ENCODE measurements at regions of chr6 and their contacts with region 1.

Region 1: DNA sequence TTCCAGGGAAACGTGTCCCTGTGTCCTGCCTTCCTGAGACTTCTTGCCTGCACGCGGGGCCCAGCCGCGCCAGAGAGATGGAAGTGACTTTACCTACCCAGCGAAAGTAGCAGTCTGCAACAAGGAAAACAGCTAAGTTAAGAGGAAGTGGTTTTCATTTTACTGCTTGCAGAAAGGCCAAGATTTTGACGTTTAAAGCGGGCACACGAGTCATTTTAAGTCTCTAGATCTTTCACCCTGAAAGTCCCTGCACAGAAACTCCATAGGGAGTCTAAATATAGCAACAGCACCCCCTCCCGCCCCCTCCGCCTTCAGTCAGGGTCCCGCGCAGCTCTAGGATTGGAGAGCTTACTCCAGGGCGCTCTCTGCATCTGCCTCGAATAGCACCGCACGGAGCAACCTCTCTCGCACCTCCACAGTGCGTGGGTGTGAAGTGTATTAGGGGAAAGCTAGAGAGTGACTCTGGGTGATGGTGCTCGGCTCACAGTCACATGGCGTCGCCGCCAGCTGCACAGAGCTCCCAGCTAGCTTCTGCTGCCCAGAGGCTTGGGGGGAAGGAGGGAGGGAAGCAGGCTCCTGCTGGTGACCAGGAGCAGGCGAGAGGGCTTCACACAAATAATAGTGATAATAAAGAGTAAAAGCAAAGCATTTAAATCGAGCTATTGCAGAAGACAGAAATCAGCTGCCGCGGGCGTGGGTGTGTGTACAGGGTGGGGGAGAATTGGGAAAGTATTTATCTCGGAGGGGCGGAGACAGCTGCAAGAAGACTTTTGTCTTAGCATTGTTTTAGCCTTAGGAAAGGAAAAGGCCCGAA is 1.8 kb upstream of the KCNQ5 start:
- DNase-seq: peak; percentile 64
- H3K4me3 ChIP-seq: peak overlapping the region in 1 of 2 experiments; percentile 92; a peak in 2 of 4 replicates
- H3K27ac ChIP-seq: no peak overlapping the region
- H3K4me1 ChIP-seq: peaks cover 9 to 17% of the 10 kb centered on the region in 2 experiments; a peak in 2 of 4 replicates
- H3K27me3 ChIP-seq: no peaks in the 10 kb centered on the region
- CTCF ChIP-seq: no peak
- EP300 ChIP-seq: no peak
- RAD21 ChIP-seq: no peak

Region 2: DNA sequence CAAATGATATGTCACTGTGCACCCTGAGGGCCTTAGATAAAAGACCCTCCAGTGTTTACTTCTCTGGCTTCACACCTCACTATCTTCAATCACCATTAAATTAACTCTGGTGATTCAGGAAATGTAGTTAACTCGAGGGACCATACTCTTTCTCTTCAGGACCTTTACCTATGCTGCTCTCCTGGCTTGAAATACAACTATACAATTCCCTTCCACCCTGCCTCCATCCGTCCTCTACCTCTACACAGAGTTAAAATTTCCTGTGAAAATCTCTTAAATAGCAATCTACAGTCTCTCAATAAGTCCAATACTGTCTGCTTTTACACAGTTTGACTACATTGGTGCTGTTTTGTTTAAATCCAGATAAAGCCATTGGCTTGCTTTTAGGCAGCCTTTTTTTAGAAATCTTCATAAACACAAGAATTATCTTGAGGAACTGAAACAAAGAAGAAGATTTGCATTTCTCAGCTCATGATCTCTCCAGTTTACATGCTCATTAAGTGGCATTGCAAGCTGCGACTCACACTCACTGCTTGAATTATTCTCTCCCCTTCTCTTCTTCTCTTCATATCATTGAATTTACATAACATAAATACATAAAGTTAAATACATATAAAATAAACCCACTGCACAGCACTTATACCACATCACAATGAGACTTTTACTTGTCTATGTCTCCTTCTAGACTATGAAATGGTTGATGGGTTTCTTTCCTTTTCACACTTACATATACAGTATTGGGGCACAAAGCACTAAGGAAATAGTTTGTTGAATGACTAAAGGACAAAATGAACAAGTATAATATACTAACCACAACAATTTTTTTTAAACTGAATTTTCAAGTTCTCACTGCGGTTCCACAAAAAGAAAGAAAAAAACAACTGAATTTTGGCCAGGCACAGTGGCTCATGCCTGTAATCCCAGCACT is 237.2 kb before region 1 on chr6:
- CTCF ChIA-PET with region 1: no interaction called
- POLR2A ChIA-PET with region 1: no interaction called
- DNase-seq: no peak
- H3K4me3 ChIP-seq: no peak overlapping the region
- H3K27ac ChIP-seq: no peak overlapping the region
- H3K4me1 ChIP-seq: no peaks in the 10 kb centered on the region
- H3K27me3 ChIP-seq: no peaks in the 10 kb centered on the region
- CTCF ChIP-seq: no peak
- EP300 ChIP-seq: no peak
- RAD21 ChIP-seq: no peak

Region 3: DNA sequence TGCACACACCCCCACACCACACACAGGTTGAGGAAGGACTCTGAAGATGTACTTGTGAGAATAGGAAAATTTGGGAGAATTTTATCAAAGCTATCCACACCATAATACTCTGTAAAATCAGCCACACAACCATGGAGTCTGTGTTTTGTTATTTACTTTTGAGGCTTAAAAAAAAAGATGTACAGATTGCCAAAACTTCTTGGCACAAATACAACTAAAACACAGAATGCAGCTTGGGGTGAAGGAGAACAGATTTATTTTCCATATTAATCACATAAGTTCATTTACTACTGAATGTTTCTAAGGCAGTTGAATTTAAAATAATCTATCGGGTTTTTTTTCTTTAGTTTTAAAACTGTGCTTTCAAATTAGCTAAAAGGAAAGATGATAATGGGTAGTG is 31.0 kb before region 1 on chr6:
- CTCF ChIA-PET with region 1: interaction called, 12 read pairs
- POLR2A ChIA-PET with region 1: no interaction called
- DNase-seq: no peak
- H3K4me3 ChIP-seq: no peak overlapping the region
- H3K27ac ChIP-seq: no peak overlapping the region
- H3K4me1 ChIP-seq: no peaks in the 10 kb centered on the region; a peak in 1 of 4 replicates
- H3K27me3 ChIP-seq: no peaks in the 10 kb centered on the region
- CTCF ChIP-seq: no peak
- EP300 ChIP-seq: no peak
- RAD21 ChIP-seq: no peak

Region 4: DNA sequence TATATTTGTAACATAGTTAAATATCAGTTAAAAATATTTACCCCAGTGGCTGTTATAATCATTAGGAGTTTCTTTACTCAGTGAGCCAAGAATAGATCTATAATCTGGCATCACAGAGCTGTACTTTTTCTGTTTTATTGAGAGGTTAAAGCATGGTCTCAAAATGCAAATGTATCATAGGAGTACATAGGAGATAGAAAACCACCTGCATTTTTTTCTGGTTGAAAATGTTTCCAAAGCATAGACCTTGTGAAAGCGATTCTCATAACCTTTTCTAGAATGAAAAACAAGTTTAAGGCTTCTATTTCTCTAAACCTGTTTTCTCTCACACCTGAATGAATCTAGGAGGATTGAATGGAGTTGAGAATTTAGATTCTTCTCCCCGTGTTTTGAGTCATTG is 16.1 kb after region 1 on chr6:
- CTCF ChIA-PET with region 1: interaction called, 13 read pairs
- POLR2A ChIA-PET with region 1: no interaction called
- DNase-seq: no peak
- H3K4me3 ChIP-seq: no peak overlapping the region
- H3K27ac ChIP-seq: no peak overlapping the region
- H3K4me1 ChIP-seq: peaks cover 0 to 2% of the 10 kb centered on the region in 2 experiments; a peak in 3 of 4 replicates
- H3K27me3 ChIP-seq: no peaks in the 10 kb centered on the region
- CTCF ChIP-seq: no peak
- EP300 ChIP-seq: no peak
- RAD21 ChIP-seq: no peak

Region 5: DNA sequence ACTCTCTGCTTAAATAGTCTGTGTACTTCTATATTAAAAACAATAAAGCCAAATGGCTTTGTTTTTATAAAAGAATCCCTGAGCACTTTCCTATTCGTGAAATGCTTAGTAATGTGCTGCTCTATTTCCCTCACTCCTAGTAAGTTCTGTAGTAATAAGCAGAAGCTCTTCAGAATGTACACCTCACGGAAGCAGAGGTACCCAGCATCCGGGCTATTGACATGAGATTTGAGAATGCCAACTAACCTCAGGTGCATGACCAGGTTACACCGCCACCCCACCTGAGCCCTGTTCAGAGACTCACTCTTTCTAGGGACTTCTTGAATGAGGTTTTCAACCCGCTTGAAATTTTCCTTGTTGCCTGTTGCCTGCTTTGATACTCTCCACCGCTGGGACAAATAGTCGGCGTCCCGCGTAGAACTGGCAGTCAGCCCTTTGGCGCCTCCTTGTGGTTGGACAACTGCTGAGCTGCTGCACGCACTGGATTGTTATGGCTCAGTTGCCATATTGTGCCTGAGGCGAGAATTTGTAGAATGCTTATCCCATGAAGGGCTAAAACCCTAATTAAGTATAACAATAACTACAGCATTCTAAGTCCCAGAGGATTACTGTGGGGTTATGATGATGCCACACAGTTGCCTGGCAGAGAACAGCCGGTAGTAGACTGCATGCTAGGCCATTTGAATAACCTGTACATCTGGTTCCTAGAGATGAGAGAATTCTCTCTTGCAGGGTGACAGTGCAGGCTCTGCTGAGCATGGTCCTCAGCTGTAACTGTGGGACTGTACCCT is 509.8 kb after region 1 on chr6:
- CTCF ChIA-PET with region 1: interaction called, 53 read pairs
- POLR2A ChIA-PET with region 1: no interaction called
- DNase-seq: peak; percentile 52
- H3K4me3 ChIP-seq: peak overlapping the region in 1 of 2 experiments; percentile 50; a peak in 1 of 4 replicates
- H3K27ac ChIP-seq: no peak overlapping the region
- H3K4me1 ChIP-seq: peaks cover 0 to 7% of the 10 kb centered on the region in 2 experiments; a peak in 1 of 4 replicates
- H3K27me3 ChIP-seq: no peaks in the 10 kb centered on the region
- CTCF ChIP-seq: peak; percentile 77
- EP300 ChIP-seq: no peak
- RAD21 ChIP-seq: peak; percentile 86

Region 6: GRCh38 chr6:73180763-73181619 is 560.9 kb after region 1 on chr6:
- CTCF ChIA-PET with region 1: interaction called, 11 read pairs
- POLR2A ChIA-PET with region 1: no interaction called
- DNase-seq: peak; percentile 56
- H3K4me3 ChIP-seq: peak overlapping the region; percentile 37 to 58
- H3K27ac ChIP-seq: peak overlapping the region; percentile 4 to 28; a peak in 1 of 4 replicates
- H3K4me1 ChIP-seq: peaks cover 2 to 4% of the 10 kb centered on the region in 2 experiments; a peak in 2 of 4 replicates
- H3K27me3 ChIP-seq: no peaks in the 10 kb centered on the region
- CTCF ChIP-seq: peak; percentile 92
- EP300 ChIP-seq: no peak
- RAD21 ChIP-seq: peak; percentile 93

Region 7: DNA sequence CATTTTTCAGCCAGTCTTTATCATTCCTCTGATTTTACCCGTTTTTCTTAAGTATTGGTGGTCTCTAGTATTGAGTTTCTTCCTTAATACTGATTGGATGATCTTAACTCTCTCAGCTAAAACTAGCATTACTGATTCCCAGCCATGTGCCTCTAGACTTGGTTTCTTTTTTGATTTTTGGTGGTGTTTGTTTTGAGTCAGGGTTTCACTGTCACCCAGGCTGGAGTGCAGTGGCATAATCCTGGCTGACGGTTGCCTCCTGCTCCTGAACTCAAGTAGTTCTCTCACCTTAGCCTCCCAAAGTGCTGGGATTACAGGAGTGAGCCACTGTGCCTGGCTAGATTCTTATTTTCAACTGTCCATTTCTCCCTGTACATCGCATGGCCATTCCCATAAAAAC is 709.1 kb after region 1 on chr6:
- CTCF ChIA-PET with region 1: interaction called, 11 read pairs
- POLR2A ChIA-PET with region 1: no interaction called
- DNase-seq: no peak
- H3K4me3 ChIP-seq: no peak overlapping the region
- H3K27ac ChIP-seq: no peak overlapping the region
- H3K4me1 ChIP-seq: no peaks in the 10 kb centered on the region
- H3K27me3 ChIP-seq: no peaks in the 10 kb centered on the region; the same call in 1 of the 2 replicates
- CTCF ChIP-seq: no peak
- EP300 ChIP-seq: no peak
- RAD21 ChIP-seq: no peak